ENCODE measurements at regions of chr17 and their contacts with region 1.

Region 1: DNA sequence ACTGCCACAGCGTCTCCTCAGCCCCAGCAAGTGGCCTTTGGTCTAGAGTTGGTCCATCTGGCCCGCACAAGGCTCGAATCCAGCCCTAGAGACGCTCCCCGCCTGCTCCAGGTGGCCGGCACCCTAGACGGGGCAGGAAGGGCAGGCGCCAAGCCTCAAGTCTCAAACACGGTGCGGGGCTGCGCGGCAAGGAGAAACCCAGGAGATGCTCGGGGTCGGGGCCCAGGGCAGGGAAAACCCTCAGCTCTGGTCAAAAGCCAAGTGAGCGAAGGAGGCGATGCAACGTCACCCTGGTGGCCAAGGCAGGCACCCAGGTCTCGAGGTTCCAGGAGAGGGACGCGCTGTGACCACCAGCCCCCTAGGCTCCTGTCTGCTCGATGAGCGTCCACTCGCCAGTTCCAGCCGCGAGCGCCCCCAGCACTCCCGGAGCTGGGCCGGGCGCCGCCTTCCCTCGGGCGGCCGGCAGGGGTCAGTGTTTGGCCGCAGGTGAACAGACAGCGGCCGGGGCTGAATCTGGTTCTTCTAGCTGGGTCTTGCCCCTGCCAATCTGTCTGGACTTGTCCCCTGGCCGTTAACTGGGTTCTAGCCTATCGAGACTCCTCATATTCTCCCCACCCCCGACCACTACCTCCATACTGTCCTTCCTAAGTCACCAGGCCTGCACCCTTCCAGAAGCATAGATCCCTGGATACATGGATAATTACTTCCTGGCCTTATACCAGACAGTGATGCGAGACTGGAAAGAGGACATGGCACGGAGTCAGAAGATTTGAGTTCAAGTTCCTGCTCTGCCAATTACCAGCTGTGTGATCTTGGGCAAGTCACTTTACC is 44.0 kb downstream of the PRAC1 start:
- DNase-seq: peak; percentile 72
- H3K4me3 ChIP-seq: 0 out of 2 replicates have a peak overlapping the region, but pooled peaks have one; percentile 12
- H3K27ac ChIP-seq: no peak overlapping the region
- H3K4me1 ChIP-seq: no peaks in the 10 kb centered on the region
- H3K27me3 ChIP-seq: peaks cover 69% of the 10 kb centered on the region

Region 2: DNA sequence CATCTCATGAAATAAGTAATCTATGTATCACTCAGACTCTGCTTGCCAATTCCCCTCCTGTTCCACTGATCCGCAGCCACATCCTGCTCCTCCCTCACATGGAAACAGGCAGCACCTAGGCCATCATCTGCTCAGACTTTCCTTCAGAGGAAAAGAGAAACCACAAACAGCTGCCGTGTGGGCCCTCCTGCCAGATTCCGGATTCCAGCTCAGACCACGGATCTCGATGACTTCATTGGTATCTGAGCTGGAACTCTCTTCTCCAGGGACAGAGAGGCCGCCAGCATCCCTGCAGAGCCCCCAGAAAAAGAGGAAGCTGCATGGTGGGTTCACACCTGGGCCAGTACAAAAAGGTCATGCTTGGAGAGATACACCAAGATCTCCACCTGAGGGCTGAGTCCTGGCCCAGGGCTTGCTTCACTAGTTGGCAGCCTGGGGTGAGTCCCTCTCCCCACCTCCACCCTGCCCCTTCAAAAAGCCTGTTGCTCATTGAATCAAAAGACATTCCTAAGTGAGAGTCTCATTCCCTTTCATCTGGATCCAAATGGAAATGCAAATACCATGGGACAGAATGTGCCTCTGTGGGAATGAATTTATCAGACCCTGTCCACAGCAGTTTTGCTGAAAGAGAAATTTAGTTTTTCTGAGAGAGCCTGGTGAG is 194.8 kb before region 1 on chr17:
- in situ Hi-C with region 1: no loop called
- DNase-seq: peak; percentile 98
- H3K4me3 ChIP-seq: peak overlapping the region; percentile 43
- H3K27ac ChIP-seq: peak overlapping the region; percentile 94
- H3K4me1 ChIP-seq: peaks cover 52% of the 10 kb centered on the region
- H3K27me3 ChIP-seq: no peaks in the 10 kb centered on the region

Region 3: GRCh38 chr17:48593840-48594537 is 84.4 kb before region 1 on chr17:
- in situ Hi-C with region 1: no loop called
- DNase-seq: peak; percentile 87
- H3K4me3 ChIP-seq: peak overlapping the region; percentile 74
- H3K27ac ChIP-seq: peak overlapping the region; percentile 28; the same call in 1 of the 2 replicates
- H3K4me1 ChIP-seq: 0 out of 2 replicates have a peak, but pooled peaks cover 3% of the 10 kb centered on the region
- H3K27me3 ChIP-seq: no peaks in the 10 kb centered on the region

Region 4: GRCh38 chr17:48878918-48879898 is 200.9 kb after region 1 on chr17:
- in situ Hi-C with region 1: loop called (anchors 10 kb)
- DNase-seq: peak; percentile 77
- H3K4me3 ChIP-seq: no peak overlapping the region
- H3K27ac ChIP-seq: no peak overlapping the region
- H3K4me1 ChIP-seq: no peaks in the 10 kb centered on the region
- H3K27me3 ChIP-seq: no peaks in the 10 kb centered on the region; the same call in 1 of the 2 replicates

Region 5: DNA sequence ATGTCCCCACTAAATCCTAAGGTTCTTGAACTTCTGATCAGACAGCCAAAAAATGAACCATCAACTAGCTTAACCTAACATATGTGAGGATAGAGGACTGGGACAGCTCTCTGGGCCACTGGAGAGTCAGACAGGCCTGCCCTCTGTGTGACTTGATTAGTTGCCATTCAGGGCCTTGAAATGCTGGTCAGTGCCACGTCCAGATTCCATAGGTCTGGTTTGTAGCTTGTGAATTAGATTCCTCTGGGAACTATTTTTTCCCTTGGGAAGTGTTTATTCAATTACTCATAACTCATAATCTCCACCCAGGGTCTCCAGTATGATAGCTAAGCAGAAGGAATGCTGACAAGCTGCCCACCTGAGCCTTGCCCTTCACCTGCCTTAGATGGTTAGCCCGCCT is 367.0 kb after region 1 on chr17:
- in situ Hi-C with region 1: loop called (anchors 10 kb)
- DNase-seq: no peak
- H3K4me3 ChIP-seq: no peak overlapping the region
- H3K27ac ChIP-seq: no peak overlapping the region
- H3K4me1 ChIP-seq: no peaks in the 10 kb centered on the region
- H3K27me3 ChIP-seq: no peaks in the 10 kb centered on the region